ENCODE measurements at regions of chr14 and their contacts with region 1.

Region 1: GRCh38 chr14:69818757-69819191 is 21.7 kb upstream of the SLC10A1 start:
- DNase-seq: peak; percentile 49
- H3K4me3 Mint-ChIP-seq: no peak overlapping the region
- H3K27ac Mint-ChIP-seq: no peak overlapping the region
- H3K4me1 Mint-ChIP-seq: peaks cover 4% of the 10 kb centered on the region
- H3K27me3 Mint-ChIP-seq: peaks cover 6% of the 10 kb centered on the region

Region 2: DNA sequence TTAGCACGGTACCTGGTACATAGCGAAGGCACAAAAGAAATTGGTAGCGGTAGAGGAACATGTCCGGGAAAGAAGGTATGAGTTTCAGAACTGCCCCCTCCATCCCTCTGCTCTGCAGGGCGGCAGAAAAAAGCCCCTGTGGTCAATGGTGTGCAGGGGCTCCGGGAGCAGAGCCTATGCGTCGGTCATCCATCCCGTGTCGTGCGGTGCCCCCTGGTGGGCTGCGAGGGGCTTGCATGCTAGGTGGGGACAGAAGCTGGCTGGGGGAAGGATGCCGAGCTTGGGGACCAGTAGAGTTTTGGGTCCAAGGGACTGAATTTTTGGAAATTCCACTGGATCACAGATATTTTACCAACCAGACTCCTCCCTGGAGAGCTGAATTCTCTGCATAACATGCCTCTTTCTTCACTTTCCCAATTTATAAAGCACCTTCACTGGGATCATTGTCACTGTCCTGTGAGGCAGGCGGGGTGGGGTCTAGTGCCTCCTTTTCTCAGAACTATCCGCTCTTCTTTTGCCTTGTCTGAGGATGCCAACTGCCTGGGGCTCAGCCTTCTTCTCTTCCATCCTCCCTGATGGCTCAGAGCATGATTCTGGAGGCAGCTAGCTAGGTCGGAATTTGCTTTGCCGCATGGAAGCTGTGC is 209.1 kb after region 1 on chr14:
- intact Hi-C with region 1: loop called (anchors 1 kb)
- DNase-seq: peak; percentile 42
- H3K4me3 Mint-ChIP-seq: no peak overlapping the region
- H3K27ac Mint-ChIP-seq: no peak overlapping the region
- H3K4me1 Mint-ChIP-seq: no peaks in the 10 kb centered on the region
- H3K27me3 Mint-ChIP-seq: peaks cover 2% of the 10 kb centered on the region

Region 3: DNA sequence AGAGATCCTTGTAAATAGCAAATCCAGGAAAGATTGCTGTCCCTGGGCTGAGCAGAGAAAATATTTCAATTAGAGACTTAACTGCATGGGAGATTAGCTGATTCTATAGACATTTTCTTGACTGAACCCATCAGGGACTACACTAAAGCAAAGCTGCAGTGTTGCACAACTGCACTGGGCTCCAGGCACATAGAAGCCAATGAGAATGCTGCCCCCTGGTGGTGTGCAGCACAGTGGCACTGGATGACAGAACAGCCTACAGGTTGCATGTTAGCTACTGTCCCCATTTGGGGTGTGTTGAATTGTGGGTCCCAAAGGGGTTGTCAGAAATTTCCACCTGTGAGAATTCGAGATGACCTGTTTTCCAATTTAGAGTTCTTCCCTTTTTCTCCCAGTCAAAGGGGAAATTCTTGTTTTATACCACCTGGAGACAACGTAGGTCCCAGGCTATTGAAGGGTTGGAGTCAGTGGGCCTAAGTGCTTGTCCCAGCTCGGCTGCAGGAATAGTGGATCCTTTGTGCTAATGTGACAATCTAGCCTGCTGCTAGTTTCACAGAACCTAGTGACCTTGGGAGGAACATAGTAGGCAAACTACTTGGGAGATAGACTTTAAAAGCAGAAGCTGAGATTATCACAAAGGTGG is 255.3 kb after region 1 on chr14:
- intact Hi-C with region 1: loop called (anchors 2 kb)
- DNase-seq: peak; percentile 12
- H3K4me3 Mint-ChIP-seq: no peak overlapping the region
- H3K27ac Mint-ChIP-seq: no peak overlapping the region
- H3K4me1 Mint-ChIP-seq: no peaks in the 10 kb centered on the region
- H3K27me3 Mint-ChIP-seq: peaks cover 16% of the 10 kb centered on the region

Measured in activated T-helper 2 cell treated with anti-CD3 and anti-CD28 coated beads, Interferon-gamma antibody, Interleukin-2, Interleukin-4, amounts not matched to agents 10 μg/mL and 5 μg/mL and 100 μg/mL, durations not matched to agents 14 hours and 24 hours and 36 hours (primary cell).